GM18951 (cell line): ENCODE measurements at regions of chr6 and their contacts with region 1.

Region 1: DNA sequence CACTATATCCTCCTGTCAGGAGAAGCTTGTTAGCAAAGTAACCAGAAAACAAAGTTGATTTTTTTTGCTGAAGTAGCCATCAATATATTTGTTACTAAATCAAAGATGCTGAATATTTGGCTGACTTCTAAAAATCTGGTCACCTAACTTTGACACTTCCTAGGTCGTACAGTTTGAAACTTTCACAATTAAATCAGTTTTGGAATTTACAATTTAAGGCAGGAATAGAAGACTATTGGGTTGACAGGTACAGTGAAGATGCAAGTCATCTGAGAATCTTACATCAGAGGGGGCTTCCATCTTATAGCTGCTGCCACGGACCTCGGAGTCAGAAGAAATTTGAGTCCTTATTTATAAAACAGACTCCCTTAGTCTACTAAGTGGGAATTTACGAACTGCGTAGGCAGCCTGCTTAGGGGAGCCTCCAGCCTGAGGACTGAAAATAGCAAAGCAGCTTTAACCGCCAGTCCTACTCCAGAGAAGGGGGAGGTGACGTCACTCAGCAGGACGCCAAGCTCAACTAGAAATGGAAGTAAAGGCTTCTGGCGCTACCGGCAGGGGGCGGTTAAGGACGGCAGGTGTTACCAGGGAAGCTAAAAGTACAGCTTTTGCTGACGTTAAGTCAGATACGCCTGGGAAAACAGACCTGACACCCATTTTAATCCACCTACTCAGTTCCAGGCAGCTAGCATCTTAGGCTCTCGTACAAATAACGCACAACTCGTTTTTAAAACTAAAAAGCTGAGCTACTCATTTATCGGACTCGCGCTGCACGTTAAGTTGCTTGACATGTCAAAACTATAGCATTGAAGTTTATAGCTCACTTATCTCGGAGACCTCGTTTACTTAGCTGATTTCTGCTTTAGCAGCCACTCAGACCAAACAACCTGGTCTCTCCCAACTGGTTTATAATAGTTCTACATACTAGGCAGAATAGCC is 61.1 kb upstream of the HFE start:
- POLR2A ChIP-seq: peak; percentile 49

Region 2: DNA sequence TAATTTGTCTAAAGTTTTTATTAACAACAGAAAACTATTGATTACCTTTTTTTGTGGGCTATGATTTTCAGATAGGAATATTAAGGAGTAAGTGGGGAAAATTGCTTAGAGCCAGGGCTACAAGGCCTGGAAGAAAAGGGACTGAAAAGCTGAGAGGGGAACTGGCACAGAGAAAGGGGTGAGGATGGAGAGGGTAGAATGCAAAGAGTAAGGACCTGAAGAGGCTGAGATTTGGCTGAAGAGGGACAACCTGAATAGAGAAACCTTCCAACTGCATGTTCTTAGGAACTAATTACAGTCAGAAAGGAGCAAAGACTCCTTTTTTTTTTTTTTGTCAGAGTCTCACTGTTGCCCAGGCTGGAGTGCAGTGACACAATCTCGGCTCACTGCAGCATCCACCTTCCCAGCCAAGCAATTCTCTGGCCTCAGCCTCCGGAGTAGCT is 448.3 kb after region 1 on chr6:
- in situ Hi-C with region 1: no loop called
- POLR2A ChIP-seq: no peak

Region 3: DNA sequence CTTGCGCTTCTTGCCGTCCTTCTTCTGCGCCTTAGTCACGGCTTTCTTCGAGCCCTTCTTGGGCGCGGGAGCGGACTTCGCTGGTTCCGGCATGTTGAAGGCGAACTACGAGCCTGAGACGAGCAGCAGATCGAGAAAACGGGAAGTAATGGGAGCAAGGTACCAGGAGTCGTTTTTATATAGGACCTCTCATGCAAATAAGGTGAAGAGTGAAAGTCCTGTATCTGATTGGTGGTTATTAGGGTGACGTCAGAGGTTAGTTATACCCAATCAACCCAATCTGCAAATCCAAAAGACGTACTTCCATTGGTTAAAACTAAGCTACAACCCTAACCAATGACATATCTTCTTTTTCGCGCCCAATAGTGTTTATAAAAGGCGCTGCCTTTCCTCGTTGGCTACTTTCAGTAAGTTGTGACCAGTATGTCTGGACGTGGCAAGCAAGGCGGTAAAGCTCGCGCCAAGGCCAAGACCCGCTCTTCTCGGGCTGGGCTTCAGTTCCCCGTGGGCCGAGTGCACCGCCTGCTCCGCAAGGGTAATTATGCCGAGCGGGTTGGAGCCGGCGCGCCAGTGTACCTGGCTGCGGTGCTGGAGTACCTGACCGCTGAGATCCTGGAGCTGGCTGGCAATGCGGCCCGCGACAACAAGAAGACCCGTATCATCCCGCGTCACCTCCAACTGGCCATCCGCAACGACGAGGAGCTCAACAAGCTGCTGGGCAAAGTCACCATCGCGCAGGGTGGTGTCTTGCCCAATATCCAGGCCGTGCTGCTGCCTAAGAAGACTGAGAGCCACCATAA is 1120.7 kb after region 1 on chr6:
- in situ Hi-C with region 1: loop called (anchors 25 kb)
- POLR2A ChIP-seq: peak; percentile 98

Region 4: GRCh38 chr6:27809939-27810767 is 1784.0 kb after region 1 on chr6:
- in situ Hi-C with region 1: loop called (anchors 10 kb)
- POLR2A ChIP-seq: peak; percentile 100